Psoas muscle (tissue), 8 donors: ENCODE measurements at regions of chr1 and their contacts with region 1.

Region 1: DNA sequence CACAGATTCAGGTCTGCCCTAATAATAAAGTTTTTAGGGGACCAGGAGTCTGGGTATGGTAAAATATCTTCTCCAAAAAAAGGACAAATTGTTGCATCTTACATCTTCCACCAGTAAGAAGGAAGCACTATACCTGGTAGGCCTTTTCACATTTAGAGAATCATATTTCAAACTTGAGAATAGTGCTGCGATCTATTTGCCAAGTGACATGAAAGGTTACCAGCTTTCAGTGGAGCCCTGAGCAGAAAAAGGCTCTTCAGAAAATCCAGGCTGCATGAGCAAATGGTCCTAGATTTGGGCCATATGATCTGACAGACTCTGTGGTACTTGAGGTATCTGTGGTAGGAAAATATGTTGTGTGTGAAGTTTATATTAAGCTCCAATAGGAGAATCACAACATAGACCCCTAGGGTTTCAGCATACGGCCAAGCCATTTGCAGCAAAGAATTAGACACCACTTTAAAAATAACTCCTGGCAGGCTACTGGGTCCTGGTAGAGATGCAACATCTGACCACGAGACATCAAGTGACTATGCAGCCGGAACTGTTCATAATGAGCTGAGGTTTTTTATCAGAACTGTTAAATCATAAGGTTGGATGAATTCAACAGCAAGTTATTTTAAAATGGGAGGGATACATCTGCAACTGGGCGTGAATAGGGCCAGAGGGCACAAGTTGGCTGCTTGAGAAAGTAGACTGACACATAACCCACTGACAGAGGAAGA is 38.6 kb upstream of the CCDC190 start:
- DNase-seq: no peak
- ATAC-seq: peak; percentile 94 to 96 (median 96)
- H3K4me3 ChIP-seq: no peak overlapping the region
- H3K27ac ChIP-seq: peak overlapping the region; percentile 84
- H3K4me1 ChIP-seq: peaks cover 37% of the 10 kb centered on the region
- H3K27me3 ChIP-seq: no peaks in the 10 kb centered on the region
- CTCF ChIP-seq: no peak

Region 2: DNA sequence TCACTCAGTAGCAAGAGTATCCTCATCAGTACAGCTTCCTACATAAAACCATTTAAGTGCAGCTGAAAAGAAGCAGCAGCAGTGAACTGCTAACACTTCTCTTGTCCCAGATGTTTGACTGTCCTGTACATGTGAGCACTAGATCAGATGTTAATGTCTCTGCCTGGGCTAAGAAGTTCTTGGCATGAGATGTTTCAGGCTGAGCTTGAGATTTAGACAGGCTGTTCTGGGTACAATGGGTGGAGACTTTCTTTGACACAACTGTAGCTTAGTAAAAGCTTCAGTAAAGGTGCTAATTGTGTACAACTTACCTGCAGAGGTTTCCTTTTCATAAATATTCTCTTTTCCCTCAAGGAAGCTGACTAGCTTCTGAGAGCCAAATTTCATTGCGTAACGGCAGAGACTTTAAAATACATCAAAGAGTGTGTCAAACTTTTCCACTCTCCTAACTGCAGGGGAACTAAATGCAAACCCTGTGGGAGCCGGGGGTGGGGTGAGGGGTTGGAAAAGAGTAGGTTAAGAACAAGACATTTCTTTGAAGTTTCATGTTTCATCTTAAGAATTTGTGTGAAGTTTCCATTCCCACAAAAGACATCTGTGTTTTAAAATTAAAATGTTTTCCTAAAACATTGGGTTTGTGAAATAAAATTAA is 43.5 kb after region 1 on chr1:
- intact Hi-C with region 1: loop called (anchors 5 kb)
- DNase-seq: peak in 1 of 2 donors; percentile 11
- ATAC-seq: peak in 3 of 4 donors; percentile 47 to 93 (median 84)
- H3K4me3 ChIP-seq: no peak overlapping the region
- H3K27ac ChIP-seq: peak overlapping the region; percentile 58
- H3K4me1 ChIP-seq: peaks cover 16% of the 10 kb centered on the region
- H3K27me3 ChIP-seq: no peaks in the 10 kb centered on the region
- CTCF ChIP-seq: no peak